ENCODE measurements at regions of chr6 and their contacts with region 1.

Region 1: DNA sequence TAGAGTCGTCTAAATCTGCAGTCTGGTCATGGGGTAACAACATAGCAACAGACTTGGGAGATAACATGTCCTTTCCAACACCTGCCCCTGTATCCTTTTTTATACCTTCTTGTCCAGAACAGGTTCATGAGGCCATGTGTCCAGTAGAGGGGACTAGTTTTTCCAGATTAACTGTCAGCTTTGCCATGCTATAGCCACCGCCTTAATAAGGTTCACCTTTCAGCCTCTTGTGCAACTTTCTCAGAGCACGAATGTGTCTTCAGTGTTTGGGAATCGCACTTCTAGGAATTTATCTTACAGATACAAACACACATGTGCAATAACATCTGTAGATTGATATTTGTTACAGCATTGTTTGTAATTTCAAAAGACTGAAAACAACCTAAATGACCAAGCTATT is 21.4 kb downstream of the NCR2 start:
- DNase-seq: no peak
- ATAC-seq: no peak
- H3K4me3 ChIP-seq: no peak overlapping the region
- H3K27ac ChIP-seq: no peak overlapping the region
- H3K4me1 ChIP-seq: no peaks in the 10 kb centered on the region
- H3K27me3 ChIP-seq: peaks cover 25% of the 10 kb centered on the region
- CTCF ChIP-seq: no peak; the same call in 1 of the 2 replicates

Region 2: GRCh38 chr6:41167173-41167963 is 189.4 kb before region 1 on chr6:
- CTCF ChIA-PET with region 1: no interaction called
- POLR2A ChIA-PET with region 1: no interaction called
- in situ Hi-C with region 1: no loop called
- intact Hi-C with region 1: no loop called
- DNase-seq: no peak
- ATAC-seq: no peak
- H3K4me3 ChIP-seq: no peak overlapping the region
- H3K27ac ChIP-seq: no peak overlapping the region
- H3K4me1 ChIP-seq: no peaks in the 10 kb centered on the region
- H3K27me3 ChIP-seq: peaks cover 7% of the 10 kb centered on the region; the same call in 1 of the 2 replicates
- CTCF ChIP-seq: no peak

Region 3: GRCh38 chr6:41505122-41506049 is 148.6 kb after region 1 on chr6:
- CTCF ChIA-PET with region 1: no interaction called
- POLR2A ChIA-PET with region 1: interaction called, 14 read pairs
- in situ Hi-C with region 1: no loop called
- intact Hi-C with region 1: no loop called
- DNase-seq: no peak
- ATAC-seq: peak; percentile 47
- H3K4me3 ChIP-seq: peak overlapping the region; percentile 14 to 45; a peak in 3 of 4 replicates
- H3K27ac ChIP-seq: no peak overlapping the region
- H3K4me1 ChIP-seq: peaks cover 3% of the 10 kb centered on the region
- H3K27me3 ChIP-seq: peaks cover 11% of the 10 kb centered on the region
- CTCF ChIP-seq: no peak

Measured in Panc1 (cell line).